ENCODE measurements at regions of chr6 and their contacts with region 1.

Region 1: GRCh38 chr6:149431905-149432775 is 32.1 kb downstream of the SUMO4 start:
- DNase-seq: peak; percentile 94
- ATAC-seq: peak; percentile 95
- H3K4me3 Mint-ChIP-seq: peak overlapping the region; percentile 61
- H3K27ac Mint-ChIP-seq: peak overlapping the region; percentile 82
- H3K4me1 Mint-ChIP-seq: peaks cover 13% of the 10 kb centered on the region
- H3K27me3 Mint-ChIP-seq: no peaks in the 10 kb centered on the region

Region 2: DNA sequence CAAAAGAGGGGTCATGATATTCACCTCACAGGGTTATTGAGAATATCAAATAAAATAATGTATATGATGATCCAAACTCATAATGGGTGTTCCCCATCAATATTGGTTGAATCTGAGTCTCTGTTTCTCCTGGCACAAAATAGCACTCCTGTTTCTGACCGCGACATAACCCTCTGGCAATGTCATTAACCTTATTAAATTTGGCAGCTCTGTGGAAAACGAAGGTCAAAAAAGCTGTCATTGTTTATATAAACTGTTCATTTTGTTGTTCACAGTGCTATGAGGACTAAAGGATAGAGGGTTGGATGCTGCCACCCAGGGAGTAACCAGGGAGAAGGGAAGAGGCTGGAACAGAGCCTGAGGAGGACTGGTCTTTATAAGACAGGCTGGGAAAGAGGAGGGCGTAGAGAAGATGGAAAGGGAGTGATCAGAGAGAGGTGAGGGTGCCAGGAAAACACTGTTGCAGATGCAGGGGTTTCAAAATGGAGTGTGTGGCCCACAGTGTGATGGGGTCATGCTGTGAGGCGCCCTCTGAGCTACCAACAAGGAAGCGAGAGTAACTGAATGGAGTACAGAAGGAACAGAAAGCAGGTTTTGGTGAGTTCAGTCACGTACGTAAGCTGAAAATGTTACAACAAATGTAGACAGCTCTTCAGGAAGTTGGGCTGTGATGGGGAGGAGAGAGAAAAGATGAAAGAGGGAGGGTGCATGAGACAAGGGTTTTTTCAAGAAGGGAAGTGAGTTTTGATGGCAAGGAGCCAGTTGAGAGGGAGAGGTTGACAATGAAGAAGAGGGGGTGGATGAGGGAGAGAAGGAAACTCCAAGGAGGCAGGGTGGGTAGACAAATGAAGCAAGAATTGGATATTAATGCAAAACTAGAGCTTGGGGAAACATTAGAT is 366.2 kb before region 1 on chr6:
- CTCF ChIA-PET with region 1: interaction called, 33 read pairs
- POLR2A ChIA-PET with region 1: no interaction called
- DNase-seq: peak; percentile 66
- ATAC-seq: peak; percentile 92
- H3K4me3 Mint-ChIP-seq: peak overlapping the region; percentile 6
- H3K27ac Mint-ChIP-seq: peak overlapping the region; percentile 90
- H3K4me1 Mint-ChIP-seq: peaks cover 40% of the 10 kb centered on the region
- H3K27me3 Mint-ChIP-seq: no peaks in the 10 kb centered on the region

Region 3: DNA sequence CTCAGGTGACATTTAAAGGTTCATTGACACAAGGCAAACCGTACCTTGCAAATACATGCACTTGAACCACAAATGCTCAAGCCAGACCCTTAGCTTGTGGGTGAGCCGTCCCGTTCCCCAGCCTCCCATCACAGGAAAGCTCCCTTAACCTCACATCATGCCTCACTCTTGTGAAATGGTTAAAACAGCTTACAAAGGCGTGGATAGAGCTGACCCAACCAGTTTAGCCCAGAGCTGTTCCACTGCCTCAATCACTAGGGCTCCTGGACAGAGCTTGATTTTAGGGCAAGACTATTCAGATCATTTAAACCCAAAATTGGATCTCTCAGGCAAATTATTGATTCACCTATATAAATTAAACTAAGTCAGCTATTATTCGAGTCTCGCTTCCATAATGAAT is 344.2 kb before region 1 on chr6:
- CTCF ChIA-PET with region 1: interaction called, 31 read pairs
- POLR2A ChIA-PET with region 1: no interaction called
- DNase-seq: no peak
- ATAC-seq: no peak
- H3K4me3 Mint-ChIP-seq: no peak overlapping the region
- H3K27ac Mint-ChIP-seq: no peak overlapping the region
- H3K4me1 Mint-ChIP-seq: peaks cover 72% of the 10 kb centered on the region
- H3K27me3 Mint-ChIP-seq: no peaks in the 10 kb centered on the region

Region 4: DNA sequence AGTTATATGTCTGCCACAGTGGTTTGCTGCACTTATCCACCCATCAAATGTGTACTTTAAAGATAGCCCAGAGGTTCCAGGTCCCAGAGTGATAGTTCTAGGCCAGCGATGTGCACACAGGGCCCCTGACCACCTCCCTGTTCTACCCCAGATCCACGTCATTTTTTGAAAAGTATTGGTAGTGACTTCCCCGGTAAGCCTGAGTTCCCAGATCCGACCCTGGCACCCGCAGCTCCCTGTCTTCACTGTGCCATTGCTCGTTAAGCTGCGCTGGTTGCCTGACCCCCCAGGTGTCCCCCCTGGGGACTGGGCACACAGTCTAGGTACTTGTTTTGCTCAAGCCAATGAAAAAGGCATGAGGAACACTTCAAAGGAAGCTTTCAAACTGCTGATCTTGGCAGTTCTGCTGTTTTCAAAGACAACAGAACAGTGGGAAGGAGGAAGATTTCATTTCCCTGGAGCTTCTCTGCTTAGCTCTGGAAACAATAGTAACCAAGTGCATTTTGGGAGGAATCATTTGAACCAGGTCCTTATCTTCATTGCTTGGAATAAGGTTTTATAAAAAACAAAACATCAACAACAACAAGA is 231.0 kb before region 1 on chr6:
- CTCF ChIA-PET with region 1: no interaction called
- POLR2A ChIA-PET with region 1: no interaction called
- DNase-seq: no peak
- ATAC-seq: no peak
- H3K4me3 Mint-ChIP-seq: no peak overlapping the region
- H3K27ac Mint-ChIP-seq: no peak overlapping the region
- H3K4me1 Mint-ChIP-seq: peaks cover 18% of the 10 kb centered on the region
- H3K27me3 Mint-ChIP-seq: no peaks in the 10 kb centered on the region

Region 5: GRCh38 chr6:149334682-149335160 is 97.4 kb before region 1 on chr6:
- CTCF ChIA-PET with region 1: interaction called, 17 read pairs
- POLR2A ChIA-PET with region 1: no interaction called
- DNase-seq: no peak
- ATAC-seq: no peak
- H3K4me3 Mint-ChIP-seq: no peak overlapping the region
- H3K27ac Mint-ChIP-seq: peak overlapping the region; percentile 43
- H3K4me1 Mint-ChIP-seq: peaks cover 82% of the 10 kb centered on the region
- H3K27me3 Mint-ChIP-seq: no peaks in the 10 kb centered on the region

Region 6: GRCh38 chr6:149443411-149444181 is 11.5 kb after region 1 on chr6:
- CTCF ChIA-PET with region 1: interaction called, 19 read pairs
- POLR2A ChIA-PET with region 1: no interaction called
- DNase-seq: no peak
- ATAC-seq: no peak
- H3K4me3 Mint-ChIP-seq: no peak overlapping the region
- H3K27ac Mint-ChIP-seq: no peak overlapping the region
- H3K4me1 Mint-ChIP-seq: peaks cover 9% of the 10 kb centered on the region
- H3K27me3 Mint-ChIP-seq: no peaks in the 10 kb centered on the region